AG04449 (cell line): ENCODE measurements at regions of chr16 and their contacts with region 1.

Region 1: DNA sequence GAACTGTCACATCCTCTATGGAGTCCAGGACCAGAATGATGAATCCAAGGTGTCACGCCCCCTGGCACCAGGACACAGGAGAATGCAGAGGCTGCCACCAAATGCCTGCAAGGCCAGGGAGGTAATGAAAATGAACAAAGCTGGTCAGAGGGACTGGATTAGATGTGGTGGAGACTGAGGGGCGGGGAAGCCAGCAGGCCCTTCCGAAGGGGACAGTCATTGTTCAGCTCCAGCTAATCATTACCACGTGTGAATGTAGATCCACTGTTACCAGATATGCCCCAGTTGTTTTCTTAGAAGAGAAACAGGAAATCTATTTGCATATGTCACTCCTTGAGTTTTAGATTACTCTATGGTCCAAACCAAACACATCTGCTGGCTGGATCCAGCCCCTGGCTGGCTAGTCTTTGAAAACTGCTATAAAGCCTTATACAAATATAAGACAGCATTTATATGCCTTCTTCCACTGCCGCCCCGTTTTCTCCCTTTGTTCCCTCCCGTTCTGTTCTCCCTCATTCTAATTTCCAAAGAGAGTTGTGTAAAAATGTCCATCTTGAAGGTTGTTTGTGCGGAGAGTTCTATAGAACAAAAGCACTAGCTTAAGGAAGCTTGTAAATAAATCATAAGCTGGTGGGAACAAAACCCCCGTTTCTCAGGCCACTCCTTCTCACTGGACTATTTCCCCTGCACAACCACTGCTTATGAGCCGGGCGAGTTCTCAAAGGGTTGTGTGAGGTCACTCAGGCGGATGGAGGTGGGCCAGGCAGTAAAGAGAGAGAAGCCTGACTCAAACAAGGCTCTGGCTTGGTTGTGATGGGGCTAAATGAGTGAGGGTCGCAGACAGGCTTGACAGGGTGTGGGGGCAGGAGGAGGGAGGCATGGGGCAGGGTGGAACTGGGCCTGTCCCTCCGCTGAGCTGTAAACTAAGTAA is 14.2 kb downstream of the CRYM start:
- DNase-seq: no peak
- H3K4me3 ChIP-seq: no peak overlapping the region
- CTCF ChIP-seq: no peak

Region 2: GRCh38 chr16:21134053-21134452 is 129.9 kb before region 1 on chr16:
- CTCF ChIA-PET with region 1: no interaction called
- POLR2A ChIA-PET with region 1: no interaction called
- DNase-seq: no peak
- H3K4me3 ChIP-seq: no peak overlapping the region
- CTCF ChIP-seq: no peak

Region 3: GRCh38 chr16:21244518-21245215 is 19.2 kb before region 1 on chr16:
- CTCF ChIA-PET with region 1: no interaction called
- POLR2A ChIA-PET with region 1: no interaction called
- DNase-seq: no peak
- H3K4me3 ChIP-seq: no peak overlapping the region
- CTCF ChIP-seq: no peak

Region 4: DNA sequence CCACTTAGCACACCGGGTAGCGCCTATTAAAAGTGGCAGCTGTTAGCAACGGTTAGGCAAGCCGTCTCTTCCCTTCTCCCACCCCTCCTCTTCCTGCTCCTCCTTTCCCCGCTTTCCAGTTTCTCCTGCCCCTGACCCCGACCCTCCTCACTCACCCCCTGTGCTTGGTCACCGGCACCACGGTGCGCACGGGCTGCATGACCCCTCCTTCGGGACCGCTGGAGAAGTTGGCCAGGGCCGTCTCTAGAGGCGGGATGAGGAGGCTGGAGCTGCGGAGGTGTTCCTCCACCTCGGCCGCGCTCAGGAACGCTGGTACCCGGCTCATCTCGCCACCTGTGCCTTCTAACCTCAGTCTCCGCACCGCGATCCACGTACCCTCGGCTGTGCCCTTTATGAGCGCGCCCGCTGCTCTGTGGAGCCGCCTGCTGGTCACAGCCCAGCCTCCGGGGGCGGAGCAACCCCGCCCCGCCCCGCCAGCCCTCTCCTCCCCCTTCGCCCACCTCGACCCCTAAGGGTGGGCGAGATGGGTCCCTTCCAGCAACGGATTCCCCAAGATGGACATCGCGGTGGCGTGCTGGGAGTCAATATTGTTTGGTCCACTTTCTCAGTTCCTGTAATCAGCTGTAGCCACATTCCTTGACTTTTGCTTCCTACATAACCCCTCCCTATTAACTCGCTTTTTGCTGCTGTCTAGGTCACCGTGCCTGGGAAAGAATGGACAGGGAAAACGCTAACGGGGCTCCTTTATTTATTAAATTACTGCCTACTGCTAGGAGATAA is 14.2 kb after region 1 on chr16 and contains the start of gene CRYM:
- CTCF ChIA-PET with region 1: interaction called, 37 read pairs
- POLR2A ChIA-PET with region 1: interaction called, 3 read pairs
- DNase-seq: no peak
- H3K4me3 ChIP-seq: peak within 1 kb of the TSS; percentile 27
- CTCF ChIP-seq: peak; percentile 82